Mammary epithelial cell (primary cell): ENCODE measurements at regions of chr20 and their contacts with region 1.

Region 1: GRCh38 chr20:33262658-33263065 is 20.4 kb upstream of the BPIFB1 start:
- DNase-seq: peak; percentile 54
- H3K4me3 ChIP-seq: no peak overlapping the region
- H3K27ac ChIP-seq: no peak overlapping the region
- H3K4me1 ChIP-seq: no peaks in the 10 kb centered on the region
- H3K27me3 ChIP-seq: peaks cover 4% of the 10 kb centered on the region
- CTCF ChIP-seq: peak; percentile 81 to 90

Region 2: DNA sequence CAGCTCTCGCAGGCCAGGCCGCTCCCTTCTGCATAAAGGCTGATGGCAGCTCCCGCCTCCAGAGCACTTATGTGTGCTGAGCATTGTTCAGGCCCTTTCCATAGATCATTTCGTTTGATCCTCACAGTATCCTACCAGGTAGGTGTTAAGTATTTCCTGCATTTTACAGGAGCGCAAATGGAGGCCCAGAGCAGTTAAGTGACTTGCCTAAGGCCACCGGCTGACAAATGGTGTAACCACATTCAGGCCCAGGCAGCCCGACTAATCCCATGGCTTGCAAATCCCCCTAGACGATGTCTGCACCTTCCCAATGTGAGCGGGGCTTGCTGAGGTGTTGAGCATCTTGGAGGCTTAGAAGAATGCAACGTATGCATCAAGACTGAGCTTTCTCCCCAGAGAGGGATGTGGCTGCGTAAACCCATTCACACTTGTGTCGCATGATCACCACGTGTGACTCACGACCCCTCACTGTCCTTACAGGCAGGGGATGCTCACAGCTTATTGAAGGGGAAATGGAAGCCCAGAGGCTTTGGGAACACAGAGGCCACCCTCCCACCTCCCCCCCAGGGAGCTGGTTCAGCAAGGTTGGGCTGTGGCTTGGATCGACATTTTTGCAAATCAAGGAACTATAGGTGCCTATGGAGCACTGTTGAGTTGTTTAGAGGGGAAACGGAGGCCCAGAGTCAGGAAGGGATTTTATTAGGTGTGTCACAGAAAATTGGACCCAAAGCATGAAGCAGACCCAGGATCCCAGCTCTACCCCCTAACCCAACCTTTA is 248.1 kb before region 1 on chr20:
- CTCF ChIA-PET with region 1: no interaction called
- dilution Hi-C with region 1: no loop called
- in situ Hi-C with region 1: no loop called
- intact Hi-C with region 1: no loop called
- DNase-seq: no peak
- H3K4me3 ChIP-seq: no peak overlapping the region
- H3K27ac ChIP-seq: no peak overlapping the region
- H3K4me1 ChIP-seq: no peaks in the 10 kb centered on the region
- H3K27me3 ChIP-seq: no peaks in the 10 kb centered on the region
- CTCF ChIP-seq: no peak

Region 3: DNA sequence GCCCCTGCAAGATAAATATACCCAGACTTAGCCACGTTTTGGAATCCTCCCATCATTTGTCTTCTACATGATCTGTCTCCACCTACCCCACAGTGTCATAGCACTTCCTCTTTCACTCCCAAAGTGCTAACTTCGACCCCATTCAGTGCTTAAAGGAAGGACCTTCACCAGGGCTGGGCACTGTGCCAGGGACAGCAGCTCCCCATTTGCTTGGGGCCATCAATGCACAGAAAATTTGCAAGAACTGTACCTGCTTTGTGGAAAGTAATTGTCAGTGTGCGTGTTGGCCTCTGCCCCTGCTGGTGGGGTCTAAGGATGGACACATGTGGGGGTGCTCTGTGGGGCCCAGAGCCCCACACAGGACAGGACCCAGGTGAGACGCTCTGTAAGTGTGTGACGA is 99.9 kb before region 1 on chr20:
- CTCF ChIA-PET with region 1: no interaction called
- dilution Hi-C with region 1: loop called (anchors 5 kb)
- in situ Hi-C with region 1: no loop called
- intact Hi-C with region 1: no loop called
- DNase-seq: no peak
- H3K4me3 ChIP-seq: no peak overlapping the region
- H3K27ac ChIP-seq: no peak overlapping the region
- H3K4me1 ChIP-seq: no peaks in the 10 kb centered on the region
- H3K27me3 ChIP-seq: no peaks in the 10 kb centered on the region
- CTCF ChIP-seq: no peak

Region 4: GRCh38 chr20:33291830-33292355 is 29.2 kb after region 1 on chr20:
- CTCF ChIA-PET with region 1: no interaction called
- dilution Hi-C with region 1: no loop called
- in situ Hi-C with region 1: no loop called
- intact Hi-C with region 1: loop called (anchors 2 kb)
- DNase-seq: peak; percentile 17
- H3K4me3 ChIP-seq: no peak overlapping the region
- H3K27ac ChIP-seq: no peak overlapping the region
- H3K4me1 ChIP-seq: no peaks in the 10 kb centered on the region
- H3K27me3 ChIP-seq: no peaks in the 10 kb centered on the region
- CTCF ChIP-seq: peak; percentile 94 to 99

Region 5: DNA sequence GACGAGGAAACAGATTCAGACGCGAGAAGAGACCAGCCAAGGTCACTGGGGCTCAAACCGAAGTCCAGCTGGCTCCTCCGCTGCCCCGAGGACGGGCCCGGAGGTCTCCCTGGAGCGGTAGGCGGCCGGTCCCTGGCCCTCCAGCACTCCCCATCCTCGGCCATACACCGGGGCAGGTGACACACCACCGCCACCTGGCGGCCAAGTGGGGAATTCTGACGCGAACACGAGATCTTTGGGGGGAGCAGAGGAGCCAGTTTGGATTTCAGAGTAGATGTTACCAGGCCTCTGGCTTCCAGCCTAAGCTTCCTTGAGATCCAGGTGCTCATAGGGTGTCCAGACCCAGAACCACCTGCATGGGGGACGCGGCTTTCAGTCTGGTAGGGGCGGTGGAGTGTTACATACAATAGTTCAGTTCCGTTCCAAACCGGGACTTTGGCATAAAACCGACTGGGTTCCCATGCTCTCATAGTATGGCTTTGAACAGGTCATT is 36.5 kb after region 1 on chr20:
- CTCF ChIA-PET with region 1: no interaction called
- dilution Hi-C with region 1: no loop called
- in situ Hi-C with region 1: no loop called
- intact Hi-C with region 1: loop called (anchors 1 kb)
- DNase-seq: peak; percentile 35
- H3K4me3 ChIP-seq: peak overlapping the region in 1 of 3 experiments; percentile 20
- H3K27ac ChIP-seq: no peak overlapping the region
- H3K4me1 ChIP-seq: no peaks in the 10 kb centered on the region
- H3K27me3 ChIP-seq: no peaks in the 10 kb centered on the region
- CTCF ChIP-seq: peak; percentile 92 to 96

Region 6: GRCh38 chr20:33318096-33318429 is 55.4 kb after region 1 on chr20:
- CTCF ChIA-PET with region 1: no interaction called
- dilution Hi-C with region 1: loop called (anchors 5 kb)
- in situ Hi-C with region 1: no loop called
- intact Hi-C with region 1: no loop called
- DNase-seq: no peak
- H3K4me3 ChIP-seq: no peak overlapping the region
- H3K27ac ChIP-seq: no peak overlapping the region
- H3K4me1 ChIP-seq: no peaks in the 10 kb centered on the region
- H3K27me3 ChIP-seq: no peaks in the 10 kb centered on the region
- CTCF ChIP-seq: no peak

Region 7: GRCh38 chr20:33359462-33359861 is 96.8 kb after region 1 on chr20:
- CTCF ChIA-PET with region 1: no interaction called
- dilution Hi-C with region 1: no loop called
- in situ Hi-C with region 1: no loop called
- intact Hi-C with region 1: no loop called
- DNase-seq: no peak
- H3K4me3 ChIP-seq: no peak overlapping the region
- H3K27ac ChIP-seq: no peak overlapping the region
- H3K4me1 ChIP-seq: no peaks in the 10 kb centered on the region
- H3K27me3 ChIP-seq: no peaks in the 10 kb centered on the region
- CTCF ChIP-seq: no peak

Region 8: DNA sequence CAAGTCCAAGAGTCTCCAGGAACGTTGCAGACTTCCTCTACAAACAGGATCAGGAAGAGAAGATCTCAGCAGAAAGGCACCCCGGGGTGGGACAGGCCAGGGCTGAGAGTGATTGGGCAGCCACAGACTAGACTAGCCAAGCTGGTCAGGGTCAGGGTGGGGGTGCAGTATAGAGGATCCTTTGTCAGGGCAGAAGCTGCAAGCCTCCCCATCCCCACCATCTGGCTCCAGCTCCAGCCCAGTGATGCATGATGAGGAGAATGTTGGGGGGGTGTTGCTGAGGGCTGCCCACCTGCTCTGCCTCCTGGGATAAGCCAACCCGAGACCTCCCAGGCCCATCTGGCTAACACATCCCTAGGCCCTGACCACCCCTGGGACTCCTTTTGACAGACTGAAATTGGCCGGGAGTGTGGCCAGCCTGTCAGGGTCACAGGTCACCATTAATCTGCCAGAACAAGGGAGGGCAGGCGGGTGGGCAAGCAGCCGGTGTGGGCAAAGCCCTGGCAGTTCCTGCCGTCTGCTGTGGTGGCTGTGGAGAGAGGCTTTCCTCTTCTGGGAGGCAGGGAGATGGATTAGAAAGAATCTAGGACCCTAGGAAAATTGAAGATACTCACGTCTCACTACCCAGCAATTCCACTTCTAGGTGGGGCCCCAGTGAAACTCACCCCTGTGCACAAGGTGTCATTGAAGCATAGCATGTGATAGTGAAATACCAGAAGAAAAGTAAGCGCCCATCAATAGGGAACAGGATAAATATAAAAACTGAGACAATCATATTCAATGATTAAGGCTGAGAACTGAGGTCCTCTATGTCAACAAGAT is 203.0 kb after region 1 on chr20:
- CTCF ChIA-PET with region 1: no interaction called
- dilution Hi-C with region 1: no loop called
- in situ Hi-C with region 1: no loop called
- intact Hi-C with region 1: no loop called
- DNase-seq: no peak
- H3K4me3 ChIP-seq: no peak overlapping the region
- H3K27ac ChIP-seq: no peak overlapping the region
- H3K4me1 ChIP-seq: no peaks in the 10 kb centered on the region
- H3K27me3 ChIP-seq: no peaks in the 10 kb centered on the region
- CTCF ChIP-seq: no peak

Region 9: DNA sequence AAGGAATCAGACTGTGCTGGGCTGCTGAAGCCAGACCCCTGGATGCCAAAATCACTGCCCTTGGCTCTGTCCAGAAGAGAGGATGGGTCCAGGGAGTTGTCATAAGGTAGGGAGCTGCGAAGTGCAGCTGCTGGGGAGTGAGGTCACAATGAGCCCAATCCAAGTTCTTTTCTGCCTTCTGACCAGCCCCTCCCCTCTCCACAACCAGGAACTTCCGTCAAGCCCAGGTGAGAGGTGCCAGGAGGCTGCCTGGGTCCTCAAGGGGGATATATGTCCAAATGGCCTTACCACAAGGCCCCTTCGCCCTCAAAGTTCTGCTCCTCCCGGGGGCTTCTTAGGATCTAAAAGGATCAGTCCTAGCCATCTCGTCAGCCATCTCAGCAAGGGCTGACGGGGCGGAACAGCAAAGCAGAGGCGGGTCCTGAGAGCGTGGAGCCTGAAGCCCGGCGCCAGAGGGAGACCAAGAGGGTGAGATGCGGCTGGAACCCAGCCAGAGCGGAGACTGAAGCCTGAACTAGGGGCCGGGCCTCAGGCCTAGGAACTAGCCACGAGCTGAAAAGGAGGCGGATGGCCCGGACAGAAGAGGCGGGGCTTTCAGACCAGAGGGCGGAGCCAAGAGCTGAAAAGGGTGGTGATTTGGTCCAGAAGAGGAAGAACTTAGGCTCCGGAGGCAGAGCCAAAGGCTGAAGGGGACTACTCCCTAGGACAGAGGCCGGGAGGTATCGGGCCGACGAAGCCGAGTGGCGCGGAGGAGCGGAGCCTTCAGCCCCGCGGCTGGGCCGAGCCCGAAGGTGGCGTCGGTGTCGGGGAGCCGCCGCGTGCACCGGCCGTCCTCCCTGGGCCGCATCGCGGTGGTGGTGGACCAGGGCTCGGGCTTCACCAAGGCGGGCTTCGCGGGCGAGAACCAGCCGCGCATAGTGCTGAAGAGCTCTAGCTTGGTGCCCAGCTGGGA is 403.9 kb after region 1 on chr20 and contains the start of gene ACTL10:
- CTCF ChIA-PET with region 1: interaction called, 6 read pairs
- dilution Hi-C with region 1: no loop called
- in situ Hi-C with region 1: no loop called
- intact Hi-C with region 1: loop called (anchors 5 kb)
- DNase-seq: peak; percentile 76
- H3K4me3 ChIP-seq: peak within 1 kb of the TSS; percentile 26 to 52 (median 50)
- H3K27ac ChIP-seq: no peak within 1 kb of the TSS
- H3K4me1 ChIP-seq: peaks cover 31% of the 10 kb centered on the region
- H3K27me3 ChIP-seq: no peaks in the 10 kb centered on the region
- CTCF ChIP-seq: peak in 1 of 2 donors; percentile 17
- total RNA-seq, gene ACTL10: 1.4 to 2.7 TPM